Naive thymus-derived CD4-positive, alpha-beta T cell (primary cell): ENCODE measurements at regions of chr4 and their contacts with region 1.

Region 1: GRCh38 chr4:4488405-4489404 is 53.1 kb downstream of the STX18 start:
- DNase-seq: peak; percentile 29 to 65 (median 56)
- ATAC-seq: peak; percentile 97
- H3K4me3 ChIP-seq: no peak overlapping the region
- H3K4me3 Mint-ChIP-seq: no peak overlapping the region
- H3K27ac ChIP-seq: no peak overlapping the region
- H3K27ac Mint-ChIP-seq: no peak overlapping the region
- H3K4me1 ChIP-seq: no peaks in the 10 kb centered on the region
- H3K4me1 Mint-ChIP-seq: peaks cover 2 to 18% (median 8%) of the 10 kb centered on the region in 7 donors
- H3K27me3 ChIP-seq: no peaks in the 10 kb centered on the region
- H3K27me3 Mint-ChIP-seq: no peaks in the 10 kb centered on the region

Region 2: GRCh38 chr4:4418676-4419390 is 69.9 kb before region 1 on chr4:
- CTCF ChIA-PET with region 1: no interaction called
- POLR2A ChIA-PET with region 1: no interaction called
- intact Hi-C with region 1: no loop called
- DNase-seq: no peak
- ATAC-seq: peak; percentile 30
- H3K4me3 ChIP-seq: no peak overlapping the region
- H3K4me3 Mint-ChIP-seq: peak overlapping the region; percentile 18 to 70 (median 54)
- H3K27ac ChIP-seq: no peak overlapping the region
- H3K27ac Mint-ChIP-seq: peak overlapping the region in 8 of 9 donors; percentile 33 to 86 (median 72)
- H3K4me1 ChIP-seq: peaks cover 0 to 13% of the 10 kb centered on the region in 2 donors
- H3K4me1 Mint-ChIP-seq: peaks cover 14 to 38% (median 27%) of the 10 kb centered on the region in 7 donors
- H3K27me3 ChIP-seq: no peaks in the 10 kb centered on the region
- H3K27me3 Mint-ChIP-seq: no peaks in the 10 kb centered on the region

Region 3: GRCh38 chr4:4575273-4576211 is 86.8 kb after region 1 on chr4:
- CTCF ChIA-PET with region 1: interaction called, 4 read pairs
- POLR2A ChIA-PET with region 1: no interaction called
- intact Hi-C with region 1: loop called (anchors 1 kb)
- DNase-seq: peak; percentile 37 to 69 (median 60)
- ATAC-seq: peak; percentile 86
- H3K4me3 ChIP-seq: peak overlapping the region; percentile 68
- H3K4me3 Mint-ChIP-seq: peak overlapping the region; percentile 72 to 92 (median 84)
- H3K27ac ChIP-seq: peak overlapping the region; percentile 64
- H3K27ac Mint-ChIP-seq: peak overlapping the region in 7 of 9 donors; percentile 3 to 95 (median 60)
- H3K4me1 ChIP-seq: peaks cover 0 to 6% of the 10 kb centered on the region in 2 donors
- H3K4me1 Mint-ChIP-seq: peaks cover 10 to 22% (median 18%) of the 10 kb centered on the region in 7 donors
- H3K27me3 ChIP-seq: no peaks in the 10 kb centered on the region
- H3K27me3 Mint-ChIP-seq: peaks cover 0 to 10% (median 0%) of the 10 kb centered on the region in 5 donors

Region 4: DNA sequence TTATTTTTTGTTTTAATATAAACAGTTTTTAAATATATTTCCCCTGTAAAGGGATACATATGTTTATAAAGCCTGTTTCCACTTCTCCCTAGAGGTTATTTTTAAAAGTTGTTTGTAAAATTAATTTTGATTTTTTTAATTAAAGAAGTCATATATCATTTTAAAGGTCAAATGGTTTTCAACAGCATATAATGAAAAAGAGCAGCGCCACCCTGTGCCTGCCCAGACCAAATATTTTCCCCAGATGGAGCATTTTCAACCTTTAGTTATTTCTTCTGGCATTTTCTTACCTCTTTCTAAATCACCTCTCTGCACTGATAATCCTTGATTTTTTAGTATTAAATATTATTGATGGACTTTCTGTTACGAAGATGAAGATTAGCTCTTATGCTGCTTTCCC is 391.8 kb after region 1 on chr4:
- CTCF ChIA-PET with region 1: no interaction called
- POLR2A ChIA-PET with region 1: no interaction called
- intact Hi-C with region 1: loop called in 1 of 2 experiments (anchors 1 kb)
- DNase-seq: no peak
- ATAC-seq: no peak
- H3K4me3 ChIP-seq: no peak overlapping the region
- H3K4me3 Mint-ChIP-seq: no peak overlapping the region
- H3K27ac ChIP-seq: no peak overlapping the region
- H3K27ac Mint-ChIP-seq: no peak overlapping the region
- H3K4me1 ChIP-seq: no peaks in the 10 kb centered on the region
- H3K4me1 Mint-ChIP-seq: no peaks in the 10 kb centered on the region
- H3K27me3 ChIP-seq: no peaks in the 10 kb centered on the region
- H3K27me3 Mint-ChIP-seq: peaks cover 8 to 48% (median 44%) of the 10 kb centered on the region in 5 donors

Region 5: GRCh38 chr4:5142726-5143125 is 654.0 kb after region 1 on chr4:
- CTCF ChIA-PET with region 1: no interaction called
- POLR2A ChIA-PET with region 1: no interaction called
- intact Hi-C with region 1: loop called in 1 of 2 experiments (anchors 5 kb)
- DNase-seq: no peak
- ATAC-seq: no peak
- H3K4me3 ChIP-seq: no peak overlapping the region
- H3K4me3 Mint-ChIP-seq: no peak overlapping the region
- H3K27ac ChIP-seq: no peak overlapping the region
- H3K27ac Mint-ChIP-seq: no peak overlapping the region
- H3K4me1 ChIP-seq: no peaks in the 10 kb centered on the region
- H3K4me1 Mint-ChIP-seq: no peaks in the 10 kb centered on the region
- H3K27me3 ChIP-seq: no peaks in the 10 kb centered on the region
- H3K27me3 Mint-ChIP-seq: peaks cover 0 to 10% (median 3%) of the 10 kb centered on the region in 5 donors

Region 6: DNA sequence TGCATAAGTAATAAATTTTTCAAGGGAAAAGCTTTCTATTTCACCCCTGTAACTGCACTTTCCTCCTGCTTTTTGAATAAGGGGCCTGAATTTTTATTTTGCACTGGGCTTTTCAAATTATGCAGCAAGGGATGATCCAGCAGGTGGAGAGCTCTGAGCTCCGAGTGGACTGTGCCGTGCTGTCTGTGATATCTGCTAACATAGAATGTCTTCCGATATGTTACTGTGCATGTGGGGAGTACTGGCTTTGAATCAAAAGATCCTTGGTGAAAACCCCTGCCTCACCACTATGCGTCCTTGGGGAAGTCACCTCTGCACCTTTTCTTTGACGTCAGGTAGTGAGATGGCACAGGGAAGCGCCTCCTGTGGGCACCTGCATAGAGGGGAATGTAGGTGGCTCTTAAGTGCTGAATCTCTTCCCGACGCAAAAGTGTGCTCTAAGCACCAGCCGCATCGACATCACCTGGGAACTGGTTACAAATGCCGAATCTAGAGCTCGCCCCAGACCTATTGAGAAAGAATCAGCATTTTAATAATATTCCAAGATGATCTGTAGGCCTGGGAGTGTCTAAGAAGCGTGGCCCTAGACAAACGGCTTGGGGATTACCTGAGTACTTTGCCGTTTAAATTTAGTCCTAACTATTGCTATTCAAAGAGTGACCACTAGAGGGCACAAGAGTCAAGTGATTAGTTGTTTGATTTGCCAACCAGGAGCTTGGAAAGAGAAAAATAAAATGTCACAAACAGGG is 1761.7 kb after region 1 on chr4:
- CTCF ChIA-PET with region 1: no interaction called
- POLR2A ChIA-PET with region 1: no interaction called
- intact Hi-C with region 1: loop called in 1 of 2 experiments (anchors 2 kb)
- DNase-seq: peak in 7 of 9 donors; percentile 39 to 71 (median 60)
- ATAC-seq: peak; percentile 72
- H3K4me3 ChIP-seq: no peak overlapping the region
- H3K4me3 Mint-ChIP-seq: no peak overlapping the region
- H3K27ac ChIP-seq: no peak overlapping the region
- H3K27ac Mint-ChIP-seq: no peak overlapping the region
- H3K4me1 ChIP-seq: no peaks in the 10 kb centered on the region
- H3K4me1 Mint-ChIP-seq: peaks cover 0 to 6% (median 0%) of the 10 kb centered on the region in 7 donors
- H3K27me3 ChIP-seq: no peaks in the 10 kb centered on the region
- H3K27me3 Mint-ChIP-seq: peaks cover 38 to 52% (median 49%) of the 10 kb centered on the region in 5 donors